HCT116 (cell line): ENCODE measurements at regions of chr7 and their contacts with region 1.

Region 1: DNA sequence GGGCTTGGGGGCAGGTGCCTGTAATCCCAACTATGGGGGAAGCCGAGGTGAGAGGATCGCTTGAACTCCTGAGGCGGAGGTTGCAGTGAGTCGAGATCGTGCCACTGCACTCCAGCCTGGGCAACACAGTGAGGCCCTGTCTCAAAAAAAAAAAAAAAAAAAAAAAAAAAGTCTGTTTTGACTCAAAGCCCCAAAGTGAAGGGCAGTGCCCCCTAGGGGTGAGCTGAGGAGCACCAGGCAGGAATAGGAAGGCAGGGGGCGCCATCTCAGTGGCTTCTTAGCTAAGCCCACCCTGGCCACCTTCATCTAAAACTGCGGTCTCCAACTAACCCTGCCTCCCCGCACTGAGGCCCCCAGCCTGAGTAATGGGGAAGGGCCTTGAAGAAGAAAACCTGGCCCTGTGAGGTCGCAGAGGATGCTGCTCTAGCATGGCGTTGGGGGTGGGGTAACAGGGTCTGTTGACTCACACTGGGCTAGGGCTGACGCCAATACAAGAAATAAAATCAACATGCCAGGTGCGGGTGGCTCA is 9.8 kb downstream of the PODXL start:
- DNase-seq: no peak
- ATAC-seq: peak; percentile 49
- H3K4me3 ChIP-seq: no peak overlapping the region
- H3K27ac ChIP-seq: no peak overlapping the region
- H3K4me1 ChIP-seq: peaks cover 53 to 57% of the 10 kb centered on the region in 2 experiments
- H3K27me3 ChIP-seq: no peaks in the 10 kb centered on the region
- CTCF ChIP-seq: peak in 2 of 3 experiments; percentile 97 to 99; a peak in 4 of 6 replicates
- POLR2A ChIP-seq: no peak
- RAD21 ChIP-seq: no peak

Region 2: GRCh38 chr7:131581241-131582051 is 34.8 kb after region 1 on chr7:
- CTCF ChIA-PET with region 1: interaction called, 10 read pairs
- POLR2A ChIA-PET with region 1: no interaction called
- RAD21 ChIA-PET with region 1: no interaction called
- intact Hi-C with region 1: no loop called
- DNase-seq: no peak
- ATAC-seq: peak; percentile 68
- H3K4me3 ChIP-seq: no peak overlapping the region
- H3K27ac ChIP-seq: no peak overlapping the region
- H3K4me1 ChIP-seq: peaks cover 0 to 14% of the 10 kb centered on the region in 2 experiments; a peak in 2 of 4 replicates
- H3K27me3 ChIP-seq: no peaks in the 10 kb centered on the region
- CTCF ChIP-seq: peak in 1 of 3 experiments; percentile 15; a peak in 1 of 6 replicates
- POLR2A ChIP-seq: no peak
- RAD21 ChIP-seq: no peak

Region 3: DNA sequence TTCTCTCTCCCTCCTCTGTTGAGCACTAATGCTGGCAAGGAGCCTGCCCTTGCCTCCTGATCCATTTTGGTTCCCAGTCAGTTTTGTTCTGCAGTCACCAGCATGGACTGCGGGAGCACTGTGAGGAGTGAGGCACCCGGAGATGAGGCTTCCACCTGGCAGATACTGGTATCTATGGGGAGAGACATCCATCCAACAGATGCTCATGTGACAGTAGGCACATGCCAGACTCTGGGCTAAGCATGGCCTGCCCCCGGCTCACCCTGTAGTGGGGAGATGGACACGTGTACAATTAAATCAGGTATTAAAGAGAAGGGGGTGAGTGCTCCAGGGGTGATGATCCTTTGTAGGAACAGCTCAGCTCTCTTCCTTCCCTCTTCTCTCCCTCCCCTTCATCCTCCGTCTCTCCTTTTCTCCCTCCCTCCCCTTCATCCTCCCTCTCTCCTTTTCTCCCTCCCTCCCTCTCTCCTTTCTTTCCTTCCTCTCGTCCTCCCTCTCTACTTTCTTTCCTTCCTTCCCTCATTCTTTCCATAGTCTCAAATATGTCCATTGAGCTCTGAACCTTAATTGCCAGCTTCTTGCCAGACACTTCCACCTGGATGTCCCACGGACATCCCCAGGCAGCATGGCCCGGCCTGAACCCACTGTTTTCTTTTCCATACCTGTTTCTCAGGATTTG is 83.9 kb after region 1 on chr7:
- CTCF ChIA-PET with region 1: no interaction called
- POLR2A ChIA-PET with region 1: no interaction called
- RAD21 ChIA-PET with region 1: interaction called in 1 of 2 experiments, 10 read pairs
- intact Hi-C with region 1: no loop called
- DNase-seq: no peak
- ATAC-seq: no peak
- H3K4me3 ChIP-seq: no peak overlapping the region
- H3K27ac ChIP-seq: no peak overlapping the region
- H3K4me1 ChIP-seq: peaks cover 0 to 30% of the 10 kb centered on the region in 2 experiments; a peak in 3 of 4 replicates
- H3K27me3 ChIP-seq: no peaks in the 10 kb centered on the region
- CTCF ChIP-seq: no peak
- POLR2A ChIP-seq: no peak
- RAD21 ChIP-seq: no peak

Region 4: DNA sequence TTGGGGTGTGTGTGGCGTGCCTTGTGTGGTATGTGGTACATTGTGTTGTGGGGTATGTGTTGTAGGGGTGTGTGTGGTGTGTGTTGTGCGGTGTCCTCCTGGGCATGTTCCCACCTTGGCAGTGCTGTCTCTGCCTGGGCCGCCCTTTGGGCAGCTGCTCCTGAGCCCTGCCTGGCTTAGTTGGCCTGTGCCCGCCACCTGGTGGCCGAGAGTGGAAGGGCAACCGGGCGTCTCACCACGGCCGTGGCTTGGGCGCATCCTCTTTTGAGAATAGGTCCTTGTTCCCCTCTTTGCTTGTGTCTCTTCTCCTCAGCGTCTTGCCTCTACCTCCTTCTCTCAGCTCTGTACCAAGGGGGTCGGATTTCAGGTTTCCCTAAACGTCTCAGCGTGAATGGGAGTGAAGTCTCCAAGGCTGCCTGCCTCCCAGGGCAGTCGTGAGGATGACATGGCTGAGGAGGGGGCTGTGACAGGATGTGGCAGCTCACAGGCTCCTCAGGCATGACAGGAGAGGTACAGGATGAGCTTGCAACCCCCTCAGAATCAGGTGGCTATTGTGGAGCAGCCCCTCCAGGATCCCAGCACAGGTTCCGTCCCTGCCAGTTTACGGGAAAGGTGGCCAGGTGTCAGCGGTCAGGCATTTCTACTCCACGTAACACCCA is 108.2 kb after region 1 on chr7:
- CTCF ChIA-PET with region 1: interaction called, 11 read pairs
- POLR2A ChIA-PET with region 1: no interaction called
- RAD21 ChIA-PET with region 1: interaction called in 1 of 2 experiments, 3 read pairs
- intact Hi-C with region 1: loop called (anchors 1 kb)
- DNase-seq: peak; percentile 68
- ATAC-seq: peak; percentile 97
- H3K4me3 ChIP-seq: no peak overlapping the region
- H3K27ac ChIP-seq: no peak overlapping the region
- H3K4me1 ChIP-seq: peaks cover 0 to 24% of the 10 kb centered on the region in 2 experiments; a peak in 2 of 4 replicates
- H3K27me3 ChIP-seq: no peaks in the 10 kb centered on the region
- CTCF ChIP-seq: peak; percentile 87 to 94 (median 93)
- POLR2A ChIP-seq: no peak
- RAD21 ChIP-seq: peak; percentile 97